ENCODE measurements at regions of chr19 and their contacts with region 1.

Region 1: DNA sequence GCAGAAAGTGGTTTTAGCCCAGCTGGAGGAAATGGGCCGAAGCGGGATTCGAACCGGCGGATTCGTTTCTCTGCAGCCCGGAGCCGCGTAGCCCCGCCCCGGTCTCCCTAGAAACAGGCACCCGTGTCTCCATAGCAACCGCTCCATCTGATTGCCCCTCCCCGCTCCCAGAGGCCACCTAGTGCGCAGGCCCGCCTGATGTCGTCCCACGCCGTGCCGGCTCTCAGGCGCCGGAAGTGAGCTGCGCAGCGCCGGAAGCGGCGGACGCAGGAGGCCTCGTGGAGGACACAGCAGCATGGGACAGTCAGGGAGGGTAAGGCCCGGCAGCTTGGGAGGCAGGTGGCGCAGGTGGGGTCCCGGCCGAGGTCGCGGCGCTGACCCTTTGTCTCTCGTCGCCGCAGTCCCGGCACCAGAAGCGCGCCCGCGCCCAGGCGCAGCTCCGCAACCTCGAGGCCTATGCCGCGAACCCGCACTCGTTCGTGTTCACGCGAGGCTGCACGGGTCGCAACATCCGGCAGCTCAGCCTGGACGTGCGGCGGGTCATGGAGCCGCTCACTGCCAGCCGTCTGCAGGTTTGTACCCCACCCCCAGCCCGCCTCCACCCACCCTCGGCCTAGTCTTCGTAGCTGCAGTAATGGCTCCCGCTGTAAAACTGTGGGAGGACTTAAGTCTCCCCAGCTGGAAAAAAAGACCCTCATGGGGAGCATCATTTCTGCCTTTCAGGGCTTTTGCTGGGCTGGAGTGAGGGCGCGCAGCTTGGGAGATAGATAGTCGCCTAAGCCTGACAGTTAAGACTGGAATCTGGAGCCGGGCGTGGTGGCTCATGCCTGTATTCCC is at the start of gene PPAN:
- DNase-seq: peak; percentile 99
- ATAC-seq: peak; percentile 77
- H3K4me3 Mint-ChIP-seq: peak within 1 kb of the TSS; percentile 84
- H3K27ac Mint-ChIP-seq: peak within 1 kb of the TSS; percentile 96
- H3K4me1 Mint-ChIP-seq: peaks cover 78% of the 10 kb centered on the region
- H3K27me3 Mint-ChIP-seq: no peaks in the 10 kb centered on the region
- total RNA-seq, gene PPAN: 107 to 121 TPM

Region 2: DNA sequence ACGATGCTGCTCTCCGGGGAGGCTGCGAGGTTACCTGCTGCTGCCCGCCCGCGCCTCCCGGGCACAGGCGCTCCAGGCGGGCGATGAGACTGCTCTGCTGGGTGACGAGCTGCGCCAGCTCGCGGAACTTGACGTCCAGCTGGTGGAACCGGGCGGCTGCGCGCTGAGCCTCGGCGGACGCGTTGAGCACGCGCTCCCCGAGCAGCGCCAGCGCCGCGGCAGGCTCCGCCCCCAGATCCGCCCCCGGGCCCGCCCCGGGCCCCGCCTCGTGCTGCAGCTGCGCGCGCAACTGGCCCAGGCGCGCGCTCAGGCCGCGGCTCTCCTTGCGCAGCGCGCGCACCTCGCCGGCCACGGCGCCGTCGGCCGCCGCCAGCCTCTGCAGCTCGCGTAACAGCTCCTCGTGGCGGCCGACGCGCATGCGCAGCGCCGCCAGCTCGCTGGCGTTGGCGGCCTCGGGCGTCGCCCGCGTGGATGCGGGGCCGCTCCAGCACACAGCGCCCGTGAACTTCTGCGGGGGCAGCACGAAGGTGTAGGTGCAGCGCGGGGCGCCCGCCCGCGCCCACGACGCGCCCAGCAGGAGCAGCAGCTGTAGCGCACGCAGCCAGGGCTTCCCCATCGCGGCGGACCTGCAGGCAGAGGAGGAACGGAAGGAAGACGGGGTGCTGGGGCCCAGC is 10.2 kb before region 1 on chr19:
- CTCF ChIA-PET with region 1: interaction called, 135 read pairs
- POLR2A ChIA-PET with region 1: interaction called, 29 read pairs
- DNase-seq: peak; percentile 90
- ATAC-seq: peak; percentile 96
- H3K4me3 Mint-ChIP-seq: peak overlapping the region; percentile 54
- H3K27ac Mint-ChIP-seq: peak overlapping the region; percentile 72
- H3K4me1 Mint-ChIP-seq: peaks cover 43% of the 10 kb centered on the region
- H3K27me3 Mint-ChIP-seq: no peaks in the 10 kb centered on the region

Region 3: DNA sequence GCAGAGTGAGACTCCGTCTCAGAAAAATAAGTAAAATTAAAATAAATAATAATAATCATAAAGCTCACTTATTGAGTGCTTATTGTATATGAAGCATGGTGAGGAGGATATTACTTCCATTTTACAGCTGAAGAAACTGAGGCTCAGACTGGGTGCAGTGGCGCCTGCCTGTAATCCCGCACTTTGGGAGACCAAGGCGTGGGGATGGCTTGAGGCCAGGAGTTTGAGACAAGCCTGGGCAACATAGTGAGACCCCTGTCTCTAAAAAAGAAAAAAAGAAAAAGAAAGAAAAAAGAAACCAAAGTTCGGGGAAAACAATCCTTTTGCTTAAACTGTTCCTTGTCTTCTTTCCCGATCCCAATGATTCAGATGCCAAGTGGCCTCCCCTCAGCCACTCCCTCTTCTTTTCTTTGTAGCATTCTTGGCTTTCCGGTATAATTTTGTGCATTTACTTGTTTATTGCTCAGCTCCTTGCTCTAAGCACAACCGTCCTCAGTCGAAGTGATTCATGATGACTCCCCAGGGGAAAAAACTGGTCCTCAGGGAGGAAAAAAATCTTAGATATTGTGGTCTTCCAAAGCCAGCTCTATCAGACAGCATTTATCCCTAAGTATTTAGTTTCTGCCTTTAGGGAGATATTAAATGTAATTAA is 14.3 kb after region 1 on chr19:
- CTCF ChIA-PET with region 1: interaction called, 11 read pairs
- POLR2A ChIA-PET with region 1: interaction called, 92 read pairs
- DNase-seq: no peak
- ATAC-seq: no peak
- H3K4me3 Mint-ChIP-seq: no peak overlapping the region
- H3K27ac Mint-ChIP-seq: no peak overlapping the region
- H3K4me1 Mint-ChIP-seq: peaks cover 27% of the 10 kb centered on the region
- H3K27me3 Mint-ChIP-seq: no peaks in the 10 kb centered on the region

Measured in activated CD8-positive, alpha-beta T cell treated with anti-CD3 and anti-CD28 coated beads, Interleukin-2, amount 10 ng/mL, durations not matched to agents 7 days and 5 days (primary cell).